ENCODE measurements at regions of chr7 and their contacts with region 1.

Region 1: DNA sequence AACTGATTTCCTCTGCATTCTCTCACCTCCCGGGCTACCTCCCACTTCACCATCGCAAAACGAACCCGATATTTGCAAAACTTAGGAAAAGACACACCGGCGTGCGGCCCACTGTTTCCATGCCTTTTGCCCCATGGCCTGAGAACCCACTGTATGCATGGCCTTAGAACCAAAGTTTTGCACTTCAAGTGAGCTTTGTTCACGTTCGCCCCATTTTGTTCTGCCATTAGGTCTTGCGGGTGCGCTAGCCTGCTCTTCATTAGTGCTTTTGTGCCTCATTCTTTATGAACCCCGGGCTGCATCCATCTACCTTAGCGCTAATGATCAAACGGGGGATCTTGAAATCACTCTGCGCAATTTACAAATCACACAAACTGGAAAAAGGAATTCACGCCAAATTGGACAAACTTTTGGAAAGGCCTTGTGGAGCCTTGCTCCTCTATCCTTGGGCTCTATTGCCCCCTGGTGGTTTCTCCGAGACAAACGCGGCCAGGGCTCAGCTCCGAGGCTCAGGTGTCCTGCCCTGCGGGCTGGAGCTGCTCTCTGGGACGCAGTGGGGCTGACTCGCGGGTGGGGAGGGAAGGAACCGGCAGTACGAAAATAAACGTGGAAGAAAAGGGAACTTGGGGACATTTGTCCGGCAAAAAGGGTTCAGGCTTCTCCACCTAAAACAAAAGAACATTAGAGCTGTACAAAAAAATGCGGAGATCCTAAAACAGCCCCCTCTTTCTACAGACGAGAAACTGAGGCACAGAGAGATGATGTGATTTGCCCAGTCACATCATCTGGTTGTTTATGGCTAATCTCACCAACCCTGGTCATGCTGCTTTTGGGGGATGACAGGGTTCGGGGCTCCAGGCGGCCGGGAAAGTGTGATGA is 300.4 kb upstream of the NFE2L3 start:
- DNase-seq: peak; percentile 77 to 94 (median 83)
- H3K4me3 ChIP-seq: peak overlapping the region in 1 of 4 donors; percentile 42
- H3K27ac ChIP-seq: peak overlapping the region in 3 of 5 donors; percentile 41 to 74 (median 48)
- H3K4me1 ChIP-seq: peaks cover 10 to 45% of the 10 kb centered on the region in 2 donors
- H3K27me3 ChIP-seq: peaks cover 43% of the 10 kb centered on the region
- CTCF ChIP-seq: peak; percentile 74 to 94 (median 88)
- POLR2A ChIP-seq: no peak

Region 2: DNA sequence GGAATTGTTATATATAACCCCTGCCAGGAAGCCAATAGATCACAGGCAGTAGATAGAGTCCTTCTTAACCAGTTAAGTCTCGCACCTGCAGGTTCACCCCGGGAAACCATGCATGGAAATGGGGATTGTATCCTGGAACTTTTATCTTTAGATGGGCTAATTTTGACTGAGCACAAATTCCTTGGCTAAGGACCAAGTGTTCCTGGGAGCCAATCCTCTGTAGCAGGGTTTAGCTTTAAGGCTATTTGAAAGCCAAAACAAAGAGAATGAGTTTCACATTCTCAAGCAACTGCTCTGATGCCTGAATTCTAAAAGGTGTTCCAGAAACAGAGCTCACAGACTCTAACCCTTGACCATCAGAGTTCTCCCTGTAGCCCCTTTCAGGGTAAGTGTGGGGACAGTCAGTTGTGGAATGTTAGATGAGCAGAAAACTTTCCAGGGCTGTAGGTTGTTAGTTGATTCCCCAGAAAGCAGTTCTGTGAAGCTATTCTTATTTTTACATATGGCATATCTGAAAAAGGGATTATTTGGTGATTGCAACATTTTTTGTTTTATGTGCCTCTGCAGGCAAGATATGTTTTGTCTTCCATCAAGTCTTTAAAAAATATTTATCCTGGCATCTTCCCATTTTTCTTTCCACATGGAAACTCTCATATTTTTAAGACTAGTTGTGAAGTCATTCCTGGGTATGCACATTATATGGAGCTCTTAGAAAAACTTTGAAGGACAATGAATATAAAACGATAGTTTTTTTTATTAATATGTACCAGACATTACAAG is 607.1 kb before region 1 on chr7:
- intact Hi-C with region 1: loop called in 1 of 2 experiments (anchors 5 kb)
- DNase-seq: no peak
- H3K4me3 ChIP-seq: no peak overlapping the region
- H3K27ac ChIP-seq: peak overlapping the region in 1 of 5 donors; percentile 16
- H3K4me1 ChIP-seq: peaks cover 0 to 6% of the 10 kb centered on the region in 2 donors
- H3K27me3 ChIP-seq: no peaks in the 10 kb centered on the region
- CTCF ChIP-seq: no peak
- POLR2A ChIP-seq: no peak

Region 3: GRCh38 chr7:25259587-25260243 is 591.9 kb before region 1 on chr7:
- intact Hi-C with region 1: loop called in 1 of 2 experiments (anchors 10 kb)
- DNase-seq: peak; percentile 68 to 92 (median 82)
- H3K4me3 ChIP-seq: no peak overlapping the region
- H3K27ac ChIP-seq: no peak overlapping the region
- H3K4me1 ChIP-seq: peaks cover 0 to 7% of the 10 kb centered on the region in 2 donors
- H3K27me3 ChIP-seq: no peaks in the 10 kb centered on the region
- CTCF ChIP-seq: peak; percentile 64 to 96 (median 90)
- POLR2A ChIP-seq: no peak

Region 4: DNA sequence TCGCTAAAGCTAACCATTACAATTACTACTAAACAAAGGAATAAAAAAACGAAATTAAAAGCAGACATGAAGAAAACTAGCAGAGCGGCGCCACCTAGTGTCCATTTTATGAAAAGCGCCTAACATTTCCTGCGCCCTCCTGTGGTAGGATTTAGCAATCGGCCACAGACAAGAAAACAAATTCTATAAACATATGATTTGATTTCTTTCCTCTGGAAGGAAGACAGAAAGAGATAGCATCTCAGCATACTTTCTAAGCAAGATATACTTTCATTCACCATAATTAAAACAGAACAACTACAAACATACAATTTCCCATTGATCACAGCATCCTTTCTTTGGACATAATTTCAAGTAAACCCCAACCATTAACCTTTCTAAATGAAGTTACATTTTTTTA is 285.6 kb before region 1 on chr7:
- intact Hi-C with region 1: loop called in 1 of 2 experiments (anchors 5 kb)
- DNase-seq: peak; percentile 34 to 93 (median 69)
- H3K4me3 ChIP-seq: peak overlapping the region in 1 of 4 donors; percentile 30
- H3K27ac ChIP-seq: no peak overlapping the region
- H3K4me1 ChIP-seq: peaks cover 5 to 12% of the 10 kb centered on the region in 2 donors
- H3K27me3 ChIP-seq: no peaks in the 10 kb centered on the region
- CTCF ChIP-seq: peak; percentile 100
- POLR2A ChIP-seq: no peak

Region 5: GRCh38 chr7:25720427-25720826 is 131.1 kb before region 1 on chr7:
- intact Hi-C with region 1: loop called in 1 of 2 experiments (anchors 10 kb)
- DNase-seq: peak in 3 of 7 donors; percentile 16 to 55 (median 26)
- H3K4me3 ChIP-seq: no peak overlapping the region
- H3K27ac ChIP-seq: no peak overlapping the region
- H3K4me1 ChIP-seq: peaks cover 4% of the 10 kb centered on the region in 2 donors
- H3K27me3 ChIP-seq: no peaks in the 10 kb centered on the region
- CTCF ChIP-seq: peak; percentile 27 to 52 (median 38)
- POLR2A ChIP-seq: no peak

Region 6: GRCh38 chr7:25940086-25940906 is 88.7 kb after region 1 on chr7:
- intact Hi-C with region 1: no loop called
- DNase-seq: no peak
- H3K4me3 ChIP-seq: peak overlapping the region in 1 of 4 donors; percentile 33
- H3K27ac ChIP-seq: peak overlapping the region in 3 of 5 donors; percentile 9 to 28 (median 14)
- H3K4me1 ChIP-seq: no peaks in the 10 kb centered on the region
- H3K27me3 ChIP-seq: no peaks in the 10 kb centered on the region
- CTCF ChIP-seq: no peak
- POLR2A ChIP-seq: no peak

Measured in adrenal gland (tissue), 19 donors.